GM18951 (cell line): ENCODE measurements at regions of chr2 and their contacts with region 1.

Region 1: DNA sequence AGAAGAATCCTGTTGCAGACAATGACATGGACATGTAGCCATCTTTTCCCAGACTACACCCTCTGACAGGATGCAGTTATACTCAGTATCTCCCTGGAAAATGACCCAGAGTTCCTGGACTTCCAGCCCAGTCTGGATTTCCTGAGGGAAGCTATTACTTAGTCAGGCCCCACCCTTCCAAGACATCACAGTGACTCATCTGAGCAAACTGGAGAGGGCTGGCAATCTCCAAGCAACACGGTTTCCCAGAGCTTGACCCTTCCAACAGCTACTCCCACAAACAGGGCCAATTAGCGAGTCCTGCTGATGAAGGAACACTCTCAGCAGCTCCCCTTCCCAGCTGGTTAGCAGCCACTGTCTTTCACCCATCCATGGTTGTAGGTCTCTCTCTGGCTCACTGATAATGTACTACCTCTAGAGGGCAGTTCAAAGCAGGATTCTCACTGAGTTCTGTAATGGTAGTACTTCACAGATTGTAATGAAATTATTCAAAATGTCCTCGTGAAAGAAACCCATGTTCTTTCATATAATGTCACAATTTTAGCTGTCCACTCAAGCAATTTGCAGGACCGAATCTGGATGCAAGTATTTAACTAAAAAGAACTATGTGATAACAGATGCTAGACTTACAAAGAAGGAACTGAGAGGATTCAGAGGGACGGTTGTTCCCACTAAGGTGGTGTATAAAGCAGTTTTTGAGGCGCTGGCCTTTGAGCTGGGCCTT is 110.2 kb downstream of the MDH1 start:
- POLR2A ChIP-seq: no peak

Region 2: GRCh38 chr2:63012541-63012940 is 686.4 kb before region 1 on chr2:
- in situ Hi-C with region 1: no loop called
- POLR2A ChIP-seq: no peak

Region 3: GRCh38 chr2:63408530-63408929 is 290.5 kb before region 1 on chr2:
- in situ Hi-C with region 1: no loop called
- POLR2A ChIP-seq: no peak

Region 4: DNA sequence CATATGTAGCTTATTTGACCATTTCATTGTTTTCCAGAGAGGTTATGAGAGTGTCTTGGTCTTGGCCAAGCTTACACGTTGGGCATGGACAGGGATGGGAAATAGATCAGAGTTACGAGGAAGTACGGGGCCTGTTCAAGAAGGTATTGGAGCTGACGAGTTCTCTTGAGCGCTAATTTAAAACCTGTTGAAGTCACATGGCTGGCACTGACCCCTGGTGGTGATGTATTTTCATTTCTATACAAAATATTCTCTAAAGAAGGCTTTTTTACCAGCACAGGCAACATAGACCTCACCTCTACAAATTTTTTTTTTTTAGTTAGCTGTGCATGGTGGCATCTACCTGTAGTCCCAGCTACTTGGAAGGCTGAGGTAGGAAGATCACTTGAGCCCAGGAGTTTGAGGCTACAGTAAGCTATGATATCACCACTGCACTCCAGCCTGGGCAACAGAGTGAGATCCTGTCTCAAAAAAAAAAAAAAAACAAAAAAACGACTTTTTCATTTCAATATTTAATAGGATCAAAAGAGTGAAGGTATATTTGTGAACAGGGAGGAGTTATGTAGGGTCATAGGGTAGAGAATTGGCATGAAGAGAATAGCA is 162.3 kb after region 1 on chr2:
- in situ Hi-C with region 1: loop called (anchors 10 kb)
- POLR2A ChIP-seq: no peak